Brain microvascular endothelial cell (primary cell): ENCODE measurements at regions of chr7 and their contacts with region 1.

Region 1: GRCh38 chr7:74401137-74401859 is 52.4 kb upstream of the GTF2IRD1 start:
- DNase-seq: peak; percentile 48
- H3K4me3 ChIP-seq: no peak overlapping the region
- H3K27ac ChIP-seq: no peak overlapping the region
- H3K27me3 ChIP-seq: no peaks in the 10 kb centered on the region
- CTCF ChIP-seq: peak; percentile 99

Region 2: DNA sequence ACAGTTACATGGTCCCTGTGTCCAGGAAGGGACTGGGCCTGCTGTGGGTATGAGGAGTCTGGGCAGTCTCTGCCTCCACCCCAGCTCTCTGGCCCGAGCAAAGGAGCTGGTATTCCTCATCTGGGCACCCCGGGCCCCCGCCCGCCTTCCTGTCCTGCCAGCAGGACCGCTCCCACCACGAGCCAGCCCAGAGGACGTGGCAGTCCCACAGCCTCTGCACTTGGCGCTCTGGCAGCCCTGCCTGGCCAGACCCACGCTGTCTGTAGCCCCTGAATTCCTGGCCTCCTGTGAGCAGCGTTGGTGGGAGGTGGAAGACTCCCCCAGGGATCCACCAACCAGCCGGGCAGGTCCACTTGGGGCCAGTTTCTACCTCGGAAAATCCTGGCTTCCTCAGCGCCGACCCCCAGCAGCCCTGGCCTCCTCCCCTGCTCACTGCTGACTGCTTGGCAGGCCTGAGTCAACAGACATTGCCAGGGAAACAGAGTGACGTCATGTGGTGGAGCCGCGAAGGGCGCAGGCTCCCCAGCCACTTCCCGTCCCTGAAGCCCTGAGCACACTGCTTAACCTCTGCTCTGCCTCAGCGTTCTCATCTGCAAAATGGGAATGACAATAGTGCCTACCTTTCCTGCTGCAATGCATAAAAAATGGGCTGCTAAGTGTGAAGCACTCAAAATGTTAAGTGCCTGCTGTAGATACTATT is 339.3 kb before region 1 on chr7:
- in situ Hi-C with region 1: loop called (anchors 25 kb)
- DNase-seq: peak; percentile 93
- H3K4me3 ChIP-seq: peak overlapping the region; percentile 37
- H3K27ac ChIP-seq: peak overlapping the region; percentile 81
- H3K27me3 ChIP-seq: no peaks in the 10 kb centered on the region
- CTCF ChIP-seq: no peak

Region 3: GRCh38 chr7:74569501-74570075 is 168.3 kb after region 1 on chr7:
- in situ Hi-C with region 1: loop called (anchors 25 kb)
- DNase-seq: no peak
- H3K4me3 ChIP-seq: no peak overlapping the region
- H3K27ac ChIP-seq: no peak overlapping the region
- H3K27me3 ChIP-seq: no peaks in the 10 kb centered on the region
- CTCF ChIP-seq: no peak